Heart right ventricle (tissue), 16 donors: ENCODE measurements at regions of chr4 and their contacts with region 1.

Region 1: DNA sequence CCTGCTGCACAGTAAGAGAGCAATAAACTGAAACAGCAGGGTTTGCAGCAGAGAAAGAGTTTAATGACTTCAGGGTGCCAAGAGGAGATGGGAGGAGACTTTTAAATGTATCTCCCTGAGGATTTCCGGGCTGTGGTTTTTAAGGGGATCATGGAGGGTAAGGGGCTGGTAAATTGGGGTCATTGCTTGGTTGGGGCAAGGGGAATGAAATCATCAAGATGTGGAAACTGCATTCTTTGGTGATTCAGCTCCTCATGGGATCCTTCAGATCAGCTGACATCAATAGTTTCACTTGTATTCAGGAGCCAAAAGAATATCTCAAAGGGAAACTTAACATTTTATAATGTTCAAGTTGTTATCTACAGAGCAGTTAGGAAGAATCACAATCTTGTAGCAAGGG is 174.3 kb upstream of the ANXA10 start:
- DNase-seq: no peak
- ATAC-seq: no peak
- H3K4me3 ChIP-seq: no peak overlapping the region
- H3K27ac ChIP-seq: no peak overlapping the region
- H3K4me1 ChIP-seq: no peaks in the 10 kb centered on the region
- H3K27me3 ChIP-seq: no peaks in the 10 kb centered on the region
- CTCF ChIP-seq: no peak

Region 2: DNA sequence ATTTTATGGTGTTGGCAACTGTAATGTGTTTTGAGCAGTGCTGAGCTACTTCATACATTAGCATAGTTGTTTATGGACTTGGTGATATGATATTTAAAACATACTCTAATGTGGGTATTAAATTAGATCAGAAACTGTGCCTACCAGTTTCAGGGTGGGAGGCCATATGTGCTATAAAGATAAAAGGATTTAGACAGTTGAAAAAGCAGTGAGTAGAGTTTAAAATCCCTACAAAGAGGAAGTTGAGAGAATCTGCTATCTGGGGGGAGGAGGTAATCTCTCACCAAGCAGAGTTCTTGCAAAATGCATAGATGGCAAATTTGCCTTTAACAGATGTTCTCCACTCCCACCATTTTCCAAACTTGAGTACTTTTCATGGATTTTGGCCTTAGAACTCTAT is 838.3 kb before region 1 on chr4:
- intact Hi-C with region 1: no loop called
- DNase-seq: no peak
- ATAC-seq: no peak
- H3K4me3 ChIP-seq: no peak overlapping the region
- H3K27ac ChIP-seq: no peak overlapping the region
- H3K4me1 ChIP-seq: no peaks in the 10 kb centered on the region
- H3K27me3 ChIP-seq: no peaks in the 10 kb centered on the region
- CTCF ChIP-seq: no peak

Region 3: DNA sequence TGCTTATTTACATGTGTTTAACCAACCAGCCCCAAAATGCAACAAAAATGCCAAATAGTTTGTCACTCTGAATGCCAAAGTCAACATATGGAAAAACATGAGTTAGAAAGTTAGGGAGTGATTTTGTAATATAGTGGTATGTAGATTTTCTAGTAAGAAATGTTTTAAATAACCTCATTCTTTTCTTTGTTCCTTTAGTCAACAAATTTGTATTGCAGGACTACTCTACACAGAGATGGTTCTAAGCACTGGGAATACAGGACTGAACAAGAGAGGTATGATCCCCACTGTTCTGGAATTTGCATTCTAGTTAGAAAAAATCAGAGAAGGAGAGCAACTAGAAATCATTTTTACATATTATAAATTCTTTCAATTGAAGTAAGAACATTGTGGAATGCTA is 44.6 kb before region 1 on chr4:
- intact Hi-C with region 1: loop called in 1 of 10 experiments (anchors 1 kb)
- DNase-seq: no peak
- ATAC-seq: no peak
- H3K4me3 ChIP-seq: no peak overlapping the region
- H3K27ac ChIP-seq: no peak overlapping the region
- H3K4me1 ChIP-seq: no peaks in the 10 kb centered on the region
- H3K27me3 ChIP-seq: no peaks in the 10 kb centered on the region
- CTCF ChIP-seq: no peak